ENCODE measurements at regions of chr6 and their contacts with region 1.

Region 1: DNA sequence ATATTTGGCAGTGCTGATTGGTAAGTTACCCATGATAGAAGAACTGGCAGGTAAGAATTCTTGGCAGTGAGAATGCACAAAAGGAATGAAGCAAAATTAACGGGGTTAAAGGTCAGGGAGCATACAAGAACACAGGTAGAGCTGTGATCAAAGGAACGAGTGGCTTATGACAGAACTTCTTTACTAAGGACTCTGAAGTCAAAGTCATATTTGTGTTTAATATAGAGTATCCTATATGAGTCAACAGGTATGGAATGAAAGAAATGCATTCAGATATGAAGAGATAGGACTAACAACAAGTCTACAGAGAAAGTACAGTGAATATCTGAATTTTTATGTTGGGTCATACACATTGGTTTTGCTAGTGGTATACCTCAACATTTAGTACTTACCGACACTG is 209.0 kb upstream of the CITED2 start:
- DNase-seq: no peak
- H3K4me3 Mint-ChIP-seq: no peak overlapping the region
- H3K27ac Mint-ChIP-seq: no peak overlapping the region
- H3K4me1 Mint-ChIP-seq: peaks cover 19% of the 10 kb centered on the region
- H3K27me3 Mint-ChIP-seq: peaks cover 9% of the 10 kb centered on the region

Region 2: GRCh38 chr6:139600919-139601475 is 17.6 kb after region 1 on chr6:
- intact Hi-C with region 1: loop called (anchors 2 kb)
- DNase-seq: no peak
- H3K4me3 Mint-ChIP-seq: no peak overlapping the region
- H3K27ac Mint-ChIP-seq: peak overlapping the region; percentile 57
- H3K4me1 Mint-ChIP-seq: peaks cover 5% of the 10 kb centered on the region
- H3K27me3 Mint-ChIP-seq: peaks cover 1% of the 10 kb centered on the region

Measured in activated T-helper 2 cell treated with anti-CD3 and anti-CD28 coated beads, Interferon-gamma antibody, Interleukin-2, Interleukin-4, amounts not matched to agents 10 μg/mL and 5 μg/mL and 100 μg/mL, durations not matched to agents 14 hours and 24 hours and 36 hours (primary cell).